ENCODE measurements at regions of chr11 and their contacts with region 1.

Region 1: DNA sequence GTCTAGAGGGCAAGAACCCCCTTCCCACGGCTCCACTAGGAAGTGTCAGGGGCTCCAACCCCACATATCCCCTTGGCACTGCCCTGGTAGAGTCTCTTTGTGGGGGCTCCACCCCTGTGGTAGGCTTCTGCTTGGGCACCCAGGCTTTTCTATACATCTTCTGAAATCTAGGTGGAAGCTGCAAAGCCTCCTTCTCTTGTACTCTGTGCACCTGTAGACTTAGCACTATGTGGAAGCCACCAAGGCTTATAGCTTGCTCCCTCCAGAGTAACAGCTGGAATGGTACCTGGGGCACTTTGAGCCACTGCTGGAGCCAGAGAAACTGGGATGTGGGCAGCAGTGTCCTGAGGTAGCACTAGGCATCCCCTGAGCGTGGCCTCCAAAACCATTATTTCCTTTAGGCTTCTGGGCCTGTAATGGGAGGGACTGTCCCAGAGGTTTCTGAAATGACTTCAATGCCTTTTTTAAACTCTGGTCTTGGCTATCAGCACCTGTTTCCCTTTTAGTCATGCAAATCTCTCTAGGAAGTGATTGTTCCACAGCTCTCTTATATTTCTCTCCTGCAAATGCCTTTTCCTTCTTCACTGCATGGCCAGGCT is 68.4 kb downstream of the TRAF6 start:
- DNase-seq: no peak
- H3K4me3 Mint-ChIP-seq: no peak overlapping the region
- H3K27ac Mint-ChIP-seq: peak overlapping the region; percentile 36
- H3K4me1 Mint-ChIP-seq: peaks cover 41% of the 10 kb centered on the region
- H3K27me3 Mint-ChIP-seq: no peaks in the 10 kb centered on the region

Region 2: DNA sequence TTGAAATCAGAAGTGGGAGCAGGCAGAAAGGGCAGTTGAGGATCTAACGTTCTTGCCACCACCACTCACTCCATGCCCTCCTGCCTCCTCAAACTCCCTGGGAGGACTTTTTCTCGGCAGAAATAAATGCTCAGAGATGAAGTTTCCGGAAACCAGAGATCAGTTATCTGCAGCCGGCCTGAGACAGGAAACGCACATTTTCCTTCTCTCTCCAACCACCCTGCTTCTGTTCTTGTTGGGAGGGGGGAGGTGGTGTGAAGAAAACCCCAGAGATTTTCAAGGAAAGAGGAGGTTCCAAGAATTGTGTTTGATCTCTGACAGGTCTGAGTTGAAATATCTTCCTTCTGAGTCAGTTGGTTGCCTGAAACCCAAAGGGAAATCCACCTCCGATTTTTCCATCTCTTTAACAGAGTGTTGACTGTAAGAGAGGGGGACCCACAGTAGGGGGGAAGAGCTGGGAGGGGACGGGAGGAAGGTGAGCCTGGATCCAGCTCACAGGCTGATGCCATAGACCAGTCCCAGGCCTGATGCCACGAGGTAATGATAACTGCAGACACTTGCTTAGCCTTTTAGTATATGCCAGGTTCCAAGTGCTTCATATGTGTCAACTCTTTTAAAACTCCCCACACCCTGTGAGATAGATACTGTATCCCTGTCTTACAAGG is 32.4 kb before region 1 on chr11:
- intact Hi-C with region 1: loop called (anchors 1 kb)
- DNase-seq: peak; percentile 49
- H3K4me3 Mint-ChIP-seq: peak overlapping the region; percentile 69
- H3K27ac Mint-ChIP-seq: peak overlapping the region; percentile 94
- H3K4me1 Mint-ChIP-seq: peaks cover 80% of the 10 kb centered on the region
- H3K27me3 Mint-ChIP-seq: no peaks in the 10 kb centered on the region

Region 3: DNA sequence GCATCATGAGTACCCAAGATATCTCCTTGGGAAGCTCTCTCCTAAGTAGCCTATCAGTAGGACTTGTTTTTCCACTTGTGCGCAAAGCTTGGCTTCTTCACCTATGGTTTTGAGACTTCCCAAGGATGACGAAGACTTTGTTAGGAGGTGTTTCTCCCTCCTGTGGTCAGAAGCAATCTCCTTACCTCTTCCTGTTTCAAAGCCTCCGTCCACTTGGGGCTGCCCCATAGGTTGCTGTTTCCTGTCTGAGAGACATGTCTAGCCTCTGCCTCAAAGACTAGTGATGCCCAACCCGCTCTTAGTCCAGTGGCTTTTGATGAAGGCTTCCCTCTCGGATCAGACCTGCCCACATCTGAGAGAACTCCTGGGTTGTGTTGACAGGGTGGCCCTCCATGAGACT is 24.6 kb before region 1 on chr11:
- intact Hi-C with region 1: loop called (anchors 1 kb)
- DNase-seq: no peak
- H3K4me3 Mint-ChIP-seq: peak overlapping the region; percentile 78
- H3K27ac Mint-ChIP-seq: peak overlapping the region; percentile 64
- H3K4me1 Mint-ChIP-seq: peaks cover 76% of the 10 kb centered on the region
- H3K27me3 Mint-ChIP-seq: no peaks in the 10 kb centered on the region

Region 4: GRCh38 chr11:36431429-36432092 is 10.1 kb before region 1 on chr11:
- intact Hi-C with region 1: loop called (anchors 1 kb)
- DNase-seq: no peak
- H3K4me3 Mint-ChIP-seq: peak overlapping the region; percentile 54
- H3K27ac Mint-ChIP-seq: peak overlapping the region; percentile 76
- H3K4me1 Mint-ChIP-seq: peaks cover 50% of the 10 kb centered on the region
- H3K27me3 Mint-ChIP-seq: no peaks in the 10 kb centered on the region